ENCODE measurements at regions of chr19 and their contacts with region 1.

Region 1: DNA sequence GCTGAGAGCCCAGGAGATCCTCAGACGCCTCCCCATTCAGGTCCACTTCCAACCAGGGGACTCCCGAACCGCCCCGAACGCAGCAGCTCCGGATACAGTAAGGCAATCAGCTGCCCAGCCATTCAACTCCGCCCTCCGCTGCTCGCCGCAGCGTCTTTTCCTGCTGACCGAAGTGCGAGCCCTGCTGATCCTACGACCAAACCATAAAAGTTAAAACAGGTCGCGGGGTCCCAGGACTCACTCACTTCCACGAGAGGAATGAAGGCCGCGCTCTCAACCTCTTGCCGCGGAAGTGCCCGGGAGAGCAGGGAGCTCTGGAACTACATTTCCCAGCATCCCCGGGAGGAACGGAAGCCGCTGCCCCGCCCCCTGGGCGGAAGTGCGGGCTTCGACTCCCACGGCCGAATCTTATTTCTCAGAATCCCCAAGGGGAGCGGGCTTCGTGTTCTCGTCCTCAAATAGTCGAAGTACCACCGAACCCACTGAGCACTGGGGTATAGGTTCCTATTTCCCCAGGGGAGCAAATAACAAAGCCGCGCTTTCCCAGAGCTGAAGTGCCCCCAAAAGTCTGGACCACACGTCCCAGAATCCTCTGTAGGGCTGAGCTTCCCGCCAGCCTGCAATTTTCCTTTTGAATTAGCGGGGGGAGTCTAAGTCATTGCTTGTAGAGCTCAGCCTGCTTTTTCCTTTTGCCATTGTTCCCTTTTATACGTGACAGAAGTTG is at the start of gene ZNF45:
- DNase-seq: peak; percentile 90
- H3K4me3 ChIP-seq: peak within 1 kb of the TSS; percentile 36 to 93 (median 61)
- H3K27ac ChIP-seq: peak within 1 kb of the TSS; percentile 83 to 93 (median 88)
- H3K4me1 ChIP-seq: peaks cover 0 to 20% (median 10%) of the 10 kb centered on the region in 4 donors
- H3K27me3 ChIP-seq: no peaks in the 10 kb centered on the region
- CTCF ChIP-seq: peak in 1 of 5 experiments; percentile 8
- EP300 ChIP-seq: no peak
- POLR2A ChIP-seq: peak; percentile 24
- total RNA-seq, gene ZNF45: 0.75 to 19.9 (median 11.6) TPM

Region 2: DNA sequence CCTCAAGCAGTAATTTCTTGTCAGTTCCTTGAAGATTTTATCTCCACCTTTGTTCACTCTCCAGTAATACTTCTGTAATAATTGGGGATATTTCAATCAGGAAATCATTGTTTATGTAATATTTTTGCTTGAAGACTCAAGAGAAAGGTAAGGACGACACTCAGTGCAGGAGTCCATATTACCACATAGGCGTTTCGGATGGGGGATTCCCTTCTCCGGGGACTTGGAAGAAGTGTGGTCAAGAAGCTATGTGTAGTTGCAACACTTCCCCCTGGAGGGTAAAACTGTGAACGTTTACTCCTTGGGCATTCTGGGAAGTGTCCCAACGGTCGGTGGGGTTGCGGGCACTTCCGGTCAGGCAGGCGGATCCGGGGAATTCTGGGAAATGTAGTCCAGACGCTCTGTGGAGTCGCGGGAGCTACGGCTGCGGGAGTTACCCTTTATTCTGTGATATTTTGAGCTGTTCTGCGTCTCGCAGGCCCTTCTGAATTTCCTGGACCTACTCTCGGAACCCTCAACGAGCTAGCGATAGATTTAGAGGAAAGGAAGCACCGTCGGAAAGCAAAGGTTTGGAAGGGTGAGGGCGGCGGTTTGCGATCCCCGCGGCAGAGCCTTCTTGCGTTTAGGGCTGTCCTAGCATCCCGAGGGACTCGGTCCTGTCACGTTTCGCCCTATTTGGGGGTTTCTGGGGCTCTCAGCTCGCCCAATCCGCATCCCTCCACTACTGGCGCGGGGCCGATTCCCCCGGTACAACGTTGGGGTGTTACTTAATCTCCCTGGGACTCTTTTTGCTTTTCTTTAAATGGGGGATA is 15.9 kb after region 1 on chr19 and contains the start of gene ZNF221:
- in situ Hi-C with region 1: no loop called
- intact Hi-C with region 1: loop called (anchors 2 kb)
- DNase-seq: peak; percentile 90
- H3K4me3 ChIP-seq: peak within 1 kb of the TSS; percentile 57 to 86 (median 71)
- H3K27ac ChIP-seq: peak within 1 kb of the TSS; percentile 61 to 79 (median 68)
- H3K4me1 ChIP-seq: peaks cover 0 to 4% (median 2%) of the 10 kb centered on the region in 4 donors
- H3K27me3 ChIP-seq: peaks cover 9% of the 10 kb centered on the region
- CTCF ChIP-seq: peak; percentile 29 to 54 (median 47)
- EP300 ChIP-seq: no peak
- POLR2A ChIP-seq: no peak
- total RNA-seq, gene ZNF221: 1.00 to 32.2 (median 3.7) TPM

Measured in transverse colon (tissue), 4 donors.